ENCODE measurements at regions of chr17 and their contacts with region 1.

Region 1: DNA sequence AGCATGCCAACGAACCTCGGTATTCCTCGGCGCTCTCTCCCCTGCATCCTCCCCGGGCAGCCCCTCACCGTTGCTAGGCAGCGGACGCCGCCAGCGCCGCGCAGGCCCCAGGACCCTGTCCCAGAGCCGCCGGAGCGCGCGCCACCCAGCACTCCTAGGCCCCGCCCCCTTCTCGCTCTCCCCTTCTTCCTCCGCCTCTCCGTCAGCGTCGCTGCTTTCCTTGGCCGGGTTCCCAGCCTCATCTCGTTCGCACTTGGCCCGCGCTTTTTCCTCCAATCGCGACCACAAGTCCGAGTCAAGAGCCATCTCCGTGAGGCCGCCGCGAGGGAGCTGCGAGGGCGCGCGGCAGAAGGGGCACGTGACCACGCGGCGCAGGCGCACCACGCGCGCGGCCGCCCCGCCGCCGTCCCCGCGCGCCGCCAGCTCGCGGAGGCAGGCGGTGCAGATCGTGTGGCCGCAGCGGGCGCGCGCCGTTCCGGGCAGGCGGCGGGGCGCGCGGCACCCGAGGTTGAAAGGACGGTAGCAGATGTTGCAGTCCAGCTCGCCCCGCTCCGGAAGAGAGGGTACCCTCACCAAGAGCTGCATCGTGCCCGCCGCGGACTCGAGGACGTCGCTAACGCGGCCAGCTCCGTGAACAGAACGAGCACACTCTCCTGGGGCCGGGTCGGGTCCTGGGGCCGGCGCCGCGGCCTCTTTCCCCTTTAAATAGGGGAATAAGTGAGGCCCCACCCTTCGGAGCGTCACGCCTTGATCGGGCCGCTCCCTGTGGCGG is at the start of gene RNF227:
- DNase-seq: peak; percentile 82 to 92
- ATAC-seq: peak; percentile 81 to 90 (median 86)
- H3K4me3 ChIP-seq: peak within 1 kb of the TSS; percentile 51
- H3K4me3 Mint-ChIP-seq: peak within 1 kb of the TSS; percentile 94
- H3K27ac ChIP-seq: peak within 1 kb of the TSS; percentile 84
- H3K27ac Mint-ChIP-seq: peak within 1 kb of the TSS; percentile 81 to 92
- H3K4me1 ChIP-seq: peaks cover 23% of the 10 kb centered on the region
- H3K4me1 Mint-ChIP-seq: peaks cover 26 to 30% of the 10 kb centered on the region in 2 donors
- H3K27me3 ChIP-seq: no peaks in the 10 kb centered on the region
- H3K27me3 Mint-ChIP-seq: no peaks in the 10 kb centered on the region
- CTCF ChIP-seq: no peak
- total RNA-seq, gene RNF227: 3.6 to 5.9 (median 4.7) TPM

Region 2: GRCh38 chr17:7862692-7863437 is 52.9 kb before region 1 on chr17:
- intact Hi-C with region 1: loop called (anchors 5 kb)
- DNase-seq: peak; percentile 25 to 76
- ATAC-seq: no peak
- H3K4me3 ChIP-seq: no peak overlapping the region
- H3K4me3 Mint-ChIP-seq: no peak overlapping the region
- H3K27ac ChIP-seq: no peak overlapping the region
- H3K27ac Mint-ChIP-seq: no peak overlapping the region
- H3K4me1 ChIP-seq: peaks cover 18% of the 10 kb centered on the region
- H3K4me1 Mint-ChIP-seq: peaks cover 20 to 23% of the 10 kb centered on the region in 2 donors
- H3K27me3 ChIP-seq: no peaks in the 10 kb centered on the region
- H3K27me3 Mint-ChIP-seq: no peaks in the 10 kb centered on the region
- CTCF ChIP-seq: peak; percentile 84

Region 3: DNA sequence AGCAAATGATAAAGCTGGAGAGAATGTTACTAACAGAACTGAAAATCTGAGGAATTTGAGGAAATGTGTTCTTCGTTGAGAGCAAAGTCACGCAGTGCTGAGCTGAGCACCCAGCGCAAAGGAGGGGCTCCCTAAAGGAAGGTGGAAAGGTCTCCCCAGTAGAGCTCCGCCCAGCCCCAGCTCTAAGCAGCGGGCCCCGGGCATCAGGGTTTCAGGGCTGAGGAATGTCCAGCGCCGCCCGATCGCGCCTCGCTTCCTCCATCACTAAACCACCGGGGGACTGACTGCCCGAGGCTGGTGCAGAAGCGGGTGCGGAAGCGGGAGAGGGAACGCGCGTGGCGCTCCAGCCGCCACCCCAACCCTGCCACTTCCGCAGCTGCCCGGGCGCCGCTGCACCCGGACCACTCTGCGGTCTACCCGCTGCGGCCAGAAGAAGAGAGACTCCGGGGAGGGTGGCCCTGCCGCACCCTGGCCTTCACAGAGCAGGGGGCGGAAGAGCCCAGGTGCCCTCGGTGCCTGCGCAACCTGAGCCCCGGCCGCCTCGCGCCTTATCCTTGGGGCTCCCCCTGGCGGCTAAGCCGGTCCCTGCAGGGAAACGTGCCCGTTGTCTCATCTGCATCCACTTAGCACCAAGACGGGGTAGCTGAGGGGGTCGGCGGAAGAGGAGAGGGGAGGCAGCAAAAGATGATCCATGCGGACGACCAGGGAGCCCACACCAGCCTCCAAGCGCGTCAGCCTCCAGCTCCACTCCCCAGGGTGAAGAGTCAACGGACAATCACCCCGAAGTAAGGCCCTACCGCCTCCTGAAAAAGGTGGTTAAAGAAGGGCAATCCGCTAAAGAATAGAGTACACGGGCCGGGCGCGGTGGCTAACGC is 74.2 kb after region 1 on chr17:
- intact Hi-C with region 1: loop called (anchors 1 kb)
- DNase-seq: peak; percentile 94
- ATAC-seq: peak; percentile 89 to 93 (median 91)
- H3K4me3 ChIP-seq: peak overlapping the region; percentile 37
- H3K4me3 Mint-ChIP-seq: peak overlapping the region; percentile 89
- H3K27ac ChIP-seq: peak overlapping the region; percentile 48
- H3K27ac Mint-ChIP-seq: peak overlapping the region; percentile 83 to 91
- H3K4me1 ChIP-seq: peaks cover 16% of the 10 kb centered on the region
- H3K4me1 Mint-ChIP-seq: peaks cover 22 to 25% of the 10 kb centered on the region in 2 donors
- H3K27me3 ChIP-seq: no peaks in the 10 kb centered on the region
- H3K27me3 Mint-ChIP-seq: peaks cover 9 to 11% of the 10 kb centered on the region in 2 donors
- CTCF ChIP-seq: peak; percentile 90

Region 4: GRCh38 chr17:8041249-8041928 is 125.6 kb after region 1 on chr17:
- intact Hi-C with region 1: loop called (anchors 1 kb)
- DNase-seq: peak in 1 of 2 donors; percentile 72
- ATAC-seq: peak; percentile 54 to 64 (median 58)
- H3K4me3 ChIP-seq: no peak overlapping the region
- H3K4me3 Mint-ChIP-seq: no peak overlapping the region
- H3K27ac ChIP-seq: no peak overlapping the region
- H3K27ac Mint-ChIP-seq: no peak overlapping the region
- H3K4me1 ChIP-seq: no peaks in the 10 kb centered on the region
- H3K4me1 Mint-ChIP-seq: peaks cover 5 to 7% of the 10 kb centered on the region in 2 donors
- H3K27me3 ChIP-seq: peaks cover 3% of the 10 kb centered on the region
- H3K27me3 Mint-ChIP-seq: peaks cover 15 to 25% of the 10 kb centered on the region in 2 donors
- CTCF ChIP-seq: peak; percentile 54

Region 5: DNA sequence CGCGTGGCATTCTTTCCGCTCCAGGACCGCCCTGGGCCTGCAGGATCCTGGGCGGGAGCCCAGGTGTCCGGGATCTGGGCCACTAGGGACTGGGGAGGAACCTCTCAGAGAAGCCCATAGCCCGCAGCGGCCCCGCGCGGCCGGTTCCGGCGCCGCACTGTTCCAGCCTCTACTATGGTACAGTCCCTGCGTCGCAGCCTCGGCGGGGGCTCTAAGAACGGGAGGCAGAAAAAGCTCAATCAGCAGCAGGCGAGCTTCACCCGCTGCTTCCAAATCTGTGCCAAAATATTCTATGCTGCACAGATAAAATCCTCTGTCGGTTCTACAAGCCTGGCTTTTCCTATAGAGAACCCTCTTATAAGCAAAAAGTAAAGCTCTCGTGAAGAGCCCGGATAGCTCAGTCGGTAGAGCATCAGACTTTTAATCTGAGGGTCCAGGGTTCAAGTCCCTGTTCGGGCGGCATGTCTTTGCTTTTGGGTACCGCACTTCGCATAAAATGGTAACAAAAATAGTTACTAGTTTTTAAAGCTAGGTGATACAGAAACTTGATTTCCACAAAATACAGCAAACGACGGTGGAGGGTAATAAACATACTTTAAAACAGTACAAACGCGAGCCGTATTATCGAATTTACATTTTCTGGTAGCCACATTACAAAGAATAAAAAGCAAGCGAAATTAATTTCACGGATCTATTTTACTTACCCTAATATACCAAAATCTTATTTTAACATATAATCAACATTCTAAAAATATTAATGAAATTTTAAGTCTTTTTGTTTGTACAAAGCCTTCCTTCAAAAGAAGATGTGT is 203.2 kb after region 1 on chr17:
- intact Hi-C with region 1: loop called (anchors 1 kb)
- DNase-seq: peak; percentile 84 to 90
- ATAC-seq: peak; percentile 62 to 79 (median 68)
- H3K4me3 ChIP-seq: peak overlapping the region; percentile 91
- H3K4me3 Mint-ChIP-seq: peak overlapping the region; percentile 93
- H3K27ac ChIP-seq: peak overlapping the region; percentile 76
- H3K27ac Mint-ChIP-seq: peak overlapping the region; percentile 98 to 100
- H3K4me1 ChIP-seq: peaks cover 57% of the 10 kb centered on the region
- H3K4me1 Mint-ChIP-seq: peaks cover 55 to 56% of the 10 kb centered on the region in 2 donors
- H3K27me3 ChIP-seq: peaks cover 48% of the 10 kb centered on the region
- H3K27me3 Mint-ChIP-seq: peaks cover 51 to 55% of the 10 kb centered on the region in 2 donors
- CTCF ChIP-seq: peak; percentile 89

Measured in natural killer cell (primary cell).